CD4-positive, alpha-beta memory T cell (primary cell): ENCODE measurements at regions of chr10 and their contacts with region 1.

Region 1: DNA sequence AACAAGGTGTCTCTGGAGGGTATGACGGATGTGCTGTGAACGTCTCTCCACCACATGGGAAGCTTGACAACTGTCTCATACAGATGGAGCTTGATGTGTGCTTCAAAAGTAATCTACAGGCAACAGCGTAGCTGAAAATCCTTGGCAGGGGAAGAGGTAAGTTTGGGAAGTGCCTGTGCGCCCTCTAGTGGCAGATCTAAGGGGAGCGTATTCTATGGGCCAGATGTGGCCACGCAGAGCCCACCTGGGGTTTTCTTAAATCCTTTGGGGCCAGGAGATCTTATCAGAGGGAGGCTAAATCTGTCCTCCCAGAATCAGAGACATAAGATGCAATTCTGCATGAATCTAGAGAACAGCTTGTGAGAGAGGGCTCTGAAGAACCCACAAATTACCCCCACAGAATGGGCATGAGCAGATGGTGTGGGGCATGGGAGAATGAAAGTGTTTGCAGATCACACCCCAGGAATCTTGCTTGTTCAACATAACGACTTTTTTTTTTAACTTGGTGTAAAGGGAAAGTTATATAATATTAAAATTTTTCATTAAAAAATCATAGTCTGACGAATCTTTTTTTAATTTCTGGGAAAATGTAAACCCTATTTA is 91.2 kb upstream of the MPP7 start:
- DNase-seq: peak; percentile 55 to 61 (median 58)
- H3K4me3 ChIP-seq: no peak overlapping the region
- H3K4me3 Mint-ChIP-seq: peak overlapping the region in 2 of 8 donors; percentile 2 to 18
- H3K27ac ChIP-seq: no peak overlapping the region
- H3K27ac Mint-ChIP-seq: peak overlapping the region in 1 of 7 donors; percentile 67
- H3K4me1 ChIP-seq: no peaks in the 10 kb centered on the region
- H3K4me1 Mint-ChIP-seq: peaks cover 4 to 7% (median 5%) of the 10 kb centered on the region in 4 donors
- H3K27me3 ChIP-seq: no peaks in the 10 kb centered on the region
- H3K27me3 Mint-ChIP-seq: peaks cover 3 to 7% of the 10 kb centered on the region in 2 donors

Region 2: DNA sequence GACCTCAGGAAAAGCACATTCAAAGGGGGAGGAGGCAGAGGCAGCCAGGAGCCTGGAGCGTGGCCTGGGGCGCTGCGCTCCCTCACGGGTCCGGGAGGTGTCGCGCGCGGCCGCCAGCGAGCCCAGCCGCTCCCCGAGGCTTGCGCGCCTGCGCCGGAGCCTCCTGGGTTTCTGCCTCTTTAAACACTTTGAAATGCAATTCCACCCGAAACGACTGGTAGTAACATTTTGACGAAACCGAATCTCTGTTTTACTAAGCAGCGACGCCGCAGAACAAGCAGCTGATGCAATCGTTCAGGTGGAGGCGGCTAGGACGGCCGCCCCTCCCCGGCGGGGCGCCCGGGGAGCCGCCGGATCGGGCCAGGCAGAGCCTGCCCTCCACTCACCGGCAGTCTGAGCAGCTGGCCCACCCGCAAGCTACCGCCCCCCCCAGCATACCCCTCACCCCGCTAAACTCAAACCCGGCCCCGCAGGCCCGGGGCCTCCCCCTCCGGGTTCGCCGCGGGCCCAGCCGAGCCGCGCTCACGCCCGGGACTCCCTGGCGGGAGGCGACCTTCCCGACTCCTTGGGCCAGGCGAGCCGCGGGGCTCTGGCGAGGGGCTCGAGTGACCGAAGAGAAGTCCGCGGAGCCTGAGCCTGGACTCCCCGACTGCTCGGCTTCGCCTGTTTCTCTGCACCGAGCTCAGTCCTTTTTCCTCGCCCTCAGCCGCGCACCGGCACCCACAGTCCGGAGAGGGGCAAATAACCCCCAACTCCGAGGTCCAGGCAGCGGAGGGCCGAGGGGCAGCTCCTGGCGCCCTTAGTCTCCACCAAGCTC is 651.7 kb before region 1 on chr10:
- CTCF ChIA-PET with region 1: interaction called, 22 read pairs
- POLR2A ChIA-PET with region 1: no interaction called
- intact Hi-C with region 1: loop called (anchors 1 kb)
- DNase-seq: peak; percentile 77 to 82 (median 80)
- H3K4me3 ChIP-seq: peak overlapping the region; percentile 22 to 68
- H3K4me3 Mint-ChIP-seq: peak overlapping the region; percentile 82 to 96 (median 89)
- H3K27ac ChIP-seq: no peak overlapping the region
- H3K27ac Mint-ChIP-seq: peak overlapping the region in 1 of 7 donors; percentile 57
- H3K4me1 ChIP-seq: peaks cover 56% of the 10 kb centered on the region
- H3K4me1 Mint-ChIP-seq: peaks cover 23 to 47% (median 35%) of the 10 kb centered on the region in 4 donors
- H3K27me3 ChIP-seq: peaks cover 52% of the 10 kb centered on the region
- H3K27me3 Mint-ChIP-seq: peaks cover 45 to 48% of the 10 kb centered on the region in 2 donors

Region 3: DNA sequence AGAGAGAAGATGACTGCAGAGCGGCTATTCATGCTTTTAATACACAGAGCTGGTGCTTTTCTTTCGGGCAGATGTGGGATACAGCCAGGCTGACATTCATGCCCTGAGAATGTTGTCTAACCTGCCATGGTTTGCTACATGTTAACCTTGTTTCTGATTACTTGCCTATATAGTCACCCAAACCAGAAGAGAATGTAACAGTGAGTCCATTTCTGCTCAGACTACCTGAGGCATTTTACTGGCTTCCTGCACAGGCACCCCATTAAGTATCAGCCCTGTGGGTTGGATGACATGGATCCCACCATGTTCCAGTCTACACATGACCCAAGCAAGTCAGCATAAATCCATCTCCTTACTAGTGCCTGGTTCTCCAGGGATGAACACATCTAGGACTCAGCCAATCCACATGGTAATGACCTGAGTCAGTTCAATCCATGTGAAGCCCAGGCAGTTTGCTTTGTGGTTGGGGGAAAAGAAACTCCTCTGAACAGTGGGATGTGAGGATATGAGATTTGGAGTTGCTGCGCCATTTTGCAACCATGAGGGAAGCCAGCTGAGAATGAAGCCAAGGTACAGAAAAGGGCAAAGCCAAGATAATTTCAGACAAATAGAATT is 592.8 kb before region 1 on chr10:
- CTCF ChIA-PET with region 1: no interaction called
- POLR2A ChIA-PET with region 1: no interaction called
- intact Hi-C with region 1: no loop called
- DNase-seq: no peak
- H3K4me3 ChIP-seq: no peak overlapping the region
- H3K4me3 Mint-ChIP-seq: no peak overlapping the region
- H3K27ac ChIP-seq: no peak overlapping the region
- H3K27ac Mint-ChIP-seq: no peak overlapping the region
- H3K4me1 ChIP-seq: no peaks in the 10 kb centered on the region
- H3K4me1 Mint-ChIP-seq: peaks cover 0 to 2% (median 0%) of the 10 kb centered on the region in 4 donors
- H3K27me3 ChIP-seq: no peaks in the 10 kb centered on the region
- H3K27me3 Mint-ChIP-seq: peaks cover 14 to 16% of the 10 kb centered on the region in 2 donors

Region 4: DNA sequence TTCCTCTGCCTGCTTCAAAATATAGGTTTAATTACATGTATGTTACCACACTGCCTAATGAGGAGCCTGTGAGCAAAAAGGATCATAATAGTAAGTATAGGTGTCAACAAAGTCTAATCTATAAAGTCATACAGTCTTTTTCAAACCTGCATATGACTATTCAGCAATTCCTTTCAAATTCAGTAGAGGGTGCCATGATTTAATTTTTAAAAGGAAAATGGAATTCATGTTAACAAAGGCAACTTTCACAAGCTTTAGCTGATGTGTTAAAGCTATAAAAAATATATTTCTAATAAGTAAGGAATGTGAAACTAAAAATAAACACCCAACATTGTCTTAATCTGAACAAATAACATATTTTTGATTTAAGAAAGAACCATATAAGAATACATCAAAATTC is 143.3 kb before region 1 on chr10:
- CTCF ChIA-PET with region 1: interaction called, 43 read pairs
- POLR2A ChIA-PET with region 1: no interaction called
- intact Hi-C with region 1: loop called (anchors 1 kb)
- DNase-seq: peak in 4 of 5 donors; percentile 26 to 38 (median 33)
- H3K4me3 ChIP-seq: no peak overlapping the region
- H3K4me3 Mint-ChIP-seq: no peak overlapping the region
- H3K27ac ChIP-seq: no peak overlapping the region
- H3K27ac Mint-ChIP-seq: peak overlapping the region in 1 of 7 donors; percentile 26
- H3K4me1 ChIP-seq: no peaks in the 10 kb centered on the region
- H3K4me1 Mint-ChIP-seq: peaks cover 7 to 22% (median 10%) of the 10 kb centered on the region in 4 donors
- H3K27me3 ChIP-seq: no peaks in the 10 kb centered on the region
- H3K27me3 Mint-ChIP-seq: no peaks in the 10 kb centered on the region

Region 5: GRCh38 chr10:28295336-28295735 is 98.7 kb before region 1 on chr10:
- CTCF ChIA-PET with region 1: interaction called, 33 read pairs
- POLR2A ChIA-PET with region 1: no interaction called
- intact Hi-C with region 1: no loop called
- DNase-seq: no peak
- H3K4me3 ChIP-seq: no peak overlapping the region
- H3K4me3 Mint-ChIP-seq: no peak overlapping the region
- H3K27ac ChIP-seq: no peak overlapping the region
- H3K27ac Mint-ChIP-seq: peak overlapping the region in 2 of 7 donors; percentile 2 to 22
- H3K4me1 ChIP-seq: peaks cover 34% of the 10 kb centered on the region
- H3K4me1 Mint-ChIP-seq: peaks cover 46 to 70% (median 59%) of the 10 kb centered on the region in 4 donors
- H3K27me3 ChIP-seq: no peaks in the 10 kb centered on the region
- H3K27me3 Mint-ChIP-seq: no peaks in the 10 kb centered on the region

Region 6: DNA sequence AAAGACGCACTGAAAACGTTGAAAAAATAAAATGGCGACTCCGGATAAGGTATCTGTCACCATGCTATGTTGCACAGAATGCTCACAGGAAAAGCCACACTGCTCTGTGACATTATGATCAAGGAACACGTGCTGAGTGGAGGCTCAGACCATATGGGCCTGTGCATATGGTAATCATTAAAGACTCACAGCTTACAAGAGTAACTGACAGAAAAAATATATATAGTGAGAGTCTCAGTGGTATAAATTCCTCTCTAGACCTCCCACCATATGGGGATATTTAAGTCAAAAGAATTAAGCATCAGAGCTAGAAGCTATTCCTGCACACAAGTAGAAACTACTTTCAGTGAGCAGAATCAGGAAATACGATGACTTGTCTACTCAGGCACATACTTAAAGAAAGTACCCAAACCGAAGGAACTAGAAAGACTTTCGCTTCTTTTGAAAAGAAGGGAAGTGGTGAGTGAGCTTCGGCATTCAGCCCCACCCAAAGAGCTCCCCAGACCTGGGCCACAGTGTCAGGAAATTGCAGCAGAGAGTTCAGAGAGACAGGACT is 26.1 kb before region 1 on chr10:
- CTCF ChIA-PET with region 1: interaction called, 16 read pairs
- POLR2A ChIA-PET with region 1: no interaction called
- intact Hi-C with region 1: no loop called
- DNase-seq: peak; percentile 74 to 86 (median 80)
- H3K4me3 ChIP-seq: no peak overlapping the region
- H3K4me3 Mint-ChIP-seq: peak overlapping the region; percentile 41 to 87 (median 80)
- H3K27ac ChIP-seq: peak overlapping the region; percentile 65
- H3K27ac Mint-ChIP-seq: peak overlapping the region; percentile 85 to 98 (median 97)
- H3K4me1 ChIP-seq: peaks cover 58% of the 10 kb centered on the region
- H3K4me1 Mint-ChIP-seq: peaks cover 33 to 61% (median 49%) of the 10 kb centered on the region in 4 donors
- H3K27me3 ChIP-seq: no peaks in the 10 kb centered on the region
- H3K27me3 Mint-ChIP-seq: no peaks in the 10 kb centered on the region

Region 7: DNA sequence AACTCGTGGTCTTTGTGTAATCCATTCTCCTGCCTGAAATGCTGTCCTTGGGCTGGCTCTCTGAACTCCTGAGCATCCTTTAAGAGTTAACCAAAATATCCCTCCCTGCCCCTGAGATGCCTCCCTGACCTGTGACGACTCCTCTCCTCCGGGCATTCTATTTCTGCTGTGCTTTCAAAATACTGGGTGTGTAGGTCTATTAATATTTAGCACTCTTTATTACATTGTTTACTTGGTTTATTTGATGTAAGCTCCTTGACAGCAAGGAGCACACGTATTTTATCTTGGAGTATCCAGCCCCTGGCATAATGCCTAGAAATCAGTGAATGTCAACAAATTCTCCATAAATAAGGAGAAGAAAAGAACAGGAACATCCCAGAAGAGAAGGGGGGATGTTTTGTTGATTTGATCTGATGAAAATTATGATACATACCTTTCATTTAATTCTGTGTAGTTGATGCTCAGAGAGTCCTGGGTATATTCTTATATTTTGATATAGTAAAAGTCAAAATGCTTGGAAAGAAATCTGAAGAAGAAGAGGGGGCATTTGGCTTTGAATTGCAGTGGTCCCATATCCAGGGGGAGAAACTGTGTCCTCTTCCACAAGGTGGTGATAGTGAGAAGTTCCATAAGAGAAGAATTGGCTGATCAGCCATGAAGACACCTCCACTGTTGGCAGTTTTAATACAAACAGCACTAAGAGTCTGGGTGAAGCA is 16.5 kb after region 1 on chr10:
- CTCF ChIA-PET with region 1: interaction called, 13 read pairs
- POLR2A ChIA-PET with region 1: no interaction called
- intact Hi-C with region 1: no loop called
- DNase-seq: no peak
- H3K4me3 ChIP-seq: no peak overlapping the region
- H3K4me3 Mint-ChIP-seq: no peak overlapping the region
- H3K27ac ChIP-seq: no peak overlapping the region
- H3K27ac Mint-ChIP-seq: no peak overlapping the region
- H3K4me1 ChIP-seq: no peaks in the 10 kb centered on the region
- H3K4me1 Mint-ChIP-seq: peaks cover 0 to 4% (median 0%) of the 10 kb centered on the region in 4 donors
- H3K27me3 ChIP-seq: no peaks in the 10 kb centered on the region
- H3K27me3 Mint-ChIP-seq: peaks cover 18 to 19% of the 10 kb centered on the region in 2 donors

Region 8: DNA sequence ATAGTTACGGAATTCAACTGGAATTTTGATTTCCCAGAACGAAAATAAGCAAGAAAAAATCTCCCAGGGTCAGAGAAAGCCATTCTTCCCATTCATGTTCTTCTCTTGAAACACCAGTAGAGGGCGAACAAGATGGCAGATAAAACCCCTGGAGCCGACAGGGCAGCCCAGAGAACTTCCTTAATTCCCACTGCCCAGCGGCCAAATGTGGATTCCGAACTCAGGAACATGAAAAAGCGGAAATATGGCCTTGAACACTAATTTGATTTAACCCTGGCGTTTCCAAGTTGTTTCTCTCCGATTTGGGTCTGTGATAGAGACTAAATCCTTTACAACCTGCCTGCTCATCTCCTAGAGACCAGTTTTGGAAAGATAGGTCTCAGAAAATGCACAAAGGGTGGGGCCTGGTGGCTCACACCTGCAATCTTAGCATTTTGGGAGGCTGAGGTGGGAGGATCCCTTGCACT is 38.2 kb after region 1 on chr10:
- CTCF ChIA-PET with region 1: interaction called, 10 read pairs
- POLR2A ChIA-PET with region 1: no interaction called
- intact Hi-C with region 1: no loop called
- DNase-seq: peak in 4 of 5 donors; percentile 21 to 44 (median 27)
- H3K4me3 ChIP-seq: peak overlapping the region in 1 of 2 donors; percentile 42
- H3K4me3 Mint-ChIP-seq: peak overlapping the region; percentile 27 to 73 (median 62)
- H3K27ac ChIP-seq: no peak overlapping the region
- H3K27ac Mint-ChIP-seq: peak overlapping the region in 1 of 7 donors; percentile 70
- H3K4me1 ChIP-seq: peaks cover 4% of the 10 kb centered on the region
- H3K4me1 Mint-ChIP-seq: peaks cover 3 to 9% (median 6%) of the 10 kb centered on the region in 4 donors
- H3K27me3 ChIP-seq: no peaks in the 10 kb centered on the region
- H3K27me3 Mint-ChIP-seq: peaks cover 0 to 2% of the 10 kb centered on the region in 2 donors

Region 9: DNA sequence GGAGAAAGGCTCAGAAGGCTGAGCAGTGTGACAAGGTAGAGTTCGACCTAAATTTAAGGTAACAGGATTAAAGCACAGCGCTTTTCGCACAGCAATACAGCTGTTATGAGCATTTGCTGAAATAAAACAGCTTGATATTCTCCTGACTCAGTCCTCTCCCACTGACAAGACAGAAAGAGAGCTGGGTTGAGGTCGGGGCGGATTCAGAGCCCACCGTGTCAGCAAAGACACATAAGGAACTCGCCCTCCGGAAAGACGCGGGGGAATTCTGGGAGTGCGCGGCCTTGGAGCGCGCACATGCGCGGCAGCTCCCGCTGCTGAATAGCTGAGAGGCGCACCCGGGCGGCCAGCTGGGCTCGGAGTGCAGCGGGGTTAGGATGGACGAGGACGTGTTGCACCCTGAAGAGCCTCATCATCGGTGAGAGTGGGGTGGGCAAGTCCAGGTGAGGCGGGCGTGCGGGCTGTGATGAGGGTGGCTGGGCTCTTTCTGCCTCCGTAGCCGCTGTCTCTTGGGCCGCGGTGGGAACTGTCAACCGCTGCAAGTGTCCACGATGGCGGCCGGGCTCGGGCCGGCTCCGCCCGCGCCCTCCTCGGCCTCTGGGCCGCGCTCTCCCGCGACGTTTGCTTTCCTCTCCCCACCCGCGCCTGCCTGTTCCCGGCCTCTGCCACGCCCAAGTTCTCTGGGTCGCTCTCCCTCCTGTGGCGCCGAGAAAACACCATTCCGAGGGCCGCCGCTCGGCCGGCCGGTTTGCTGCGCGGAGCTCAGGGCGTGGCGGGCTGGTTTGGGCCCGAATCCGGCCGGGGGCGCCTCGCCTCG is 1015.4 kb after region 1 on chr10:
- CTCF ChIA-PET with region 1: no interaction called
- POLR2A ChIA-PET with region 1: no interaction called
- intact Hi-C with region 1: no loop called
- DNase-seq: peak; percentile 24 to 39 (median 34)
- H3K4me3 ChIP-seq: peak overlapping the region; percentile 50 to 51
- H3K4me3 Mint-ChIP-seq: peak overlapping the region; percentile 97 to 100 (median 99)
- H3K27ac ChIP-seq: peak overlapping the region; percentile 53
- H3K27ac Mint-ChIP-seq: peak overlapping the region; percentile 82 to 97 (median 95)
- H3K4me1 ChIP-seq: peaks cover 20% of the 10 kb centered on the region
- H3K4me1 Mint-ChIP-seq: peaks cover 20 to 31% (median 25%) of the 10 kb centered on the region in 4 donors
- H3K27me3 ChIP-seq: no peaks in the 10 kb centered on the region
- H3K27me3 Mint-ChIP-seq: no peaks in the 10 kb centered on the region